ENCODE measurements at regions of chr1 and their contacts with region 1.

Region 1: GRCh38 chr1:172719694-172720138 is 60.8 kb downstream of the FASLG start:
- DNase-seq: peak; percentile 57
- ATAC-seq: peak; percentile 83
- H3K4me3 ChIP-seq: no peak overlapping the region
- H3K27ac ChIP-seq: no peak overlapping the region
- H3K4me1 ChIP-seq: peaks cover 4% of the 10 kb centered on the region; the same call in 1 of the 2 replicates
- H3K27me3 ChIP-seq: no peaks in the 10 kb centered on the region
- CTCF ChIP-seq: peak; percentile 75
- POLR2A ChIP-seq: no peak
- RAD21 ChIP-seq: peak; percentile 82

Region 2: GRCh38 chr1:172449585-172450534 is 269.9 kb before region 1 on chr1:
- CTCF ChIA-PET with region 1: interaction called, 10 read pairs
- POLR2A ChIA-PET with region 1: no interaction called
- dilution Hi-C with region 1: no loop called
- in situ Hi-C with region 1: loop called (anchors 5 kb)
- intact Hi-C with region 1: loop called (anchors 1 kb)
- DNase-seq: peak; percentile 51
- ATAC-seq: peak; percentile 95
- H3K4me3 ChIP-seq: no peak overlapping the region
- H3K27ac ChIP-seq: no peak overlapping the region
- H3K4me1 ChIP-seq: peaks cover 10% of the 10 kb centered on the region
- H3K27me3 ChIP-seq: peaks cover 5% of the 10 kb centered on the region
- CTCF ChIP-seq: peak; percentile 80
- POLR2A ChIP-seq: no peak
- RAD21 ChIP-seq: peak; percentile 76

Region 3: GRCh38 chr1:172532700-172533509 is 186.8 kb before region 1 on chr1 and contains the start of gene SUCO:
- CTCF ChIA-PET with region 1: interaction called, 4 read pairs
- POLR2A ChIA-PET with region 1: no interaction called
- dilution Hi-C with region 1: no loop called
- in situ Hi-C with region 1: no loop called
- intact Hi-C with region 1: loop called (anchors 1 kb)
- DNase-seq: peak; percentile 99
- ATAC-seq: peak; percentile 92
- H3K4me3 ChIP-seq: peak within 1 kb of the TSS; percentile 97
- H3K27ac ChIP-seq: peak within 1 kb of the TSS; percentile 83
- H3K4me1 ChIP-seq: peaks cover 2% of the 10 kb centered on the region; the same call in 1 of the 2 replicates
- H3K27me3 ChIP-seq: no peaks in the 10 kb centered on the region
- CTCF ChIP-seq: no peak
- POLR2A ChIP-seq: peak; percentile 86
- RAD21 ChIP-seq: peak; percentile 1; the same call in 1 of the 2 replicates
- total RNA-seq, gene SUCO: 21.5 and 31.7 TPM in 2 replicates

Region 4: GRCh38 chr1:172609528-172609927 is 110.2 kb before region 1 on chr1:
- CTCF ChIA-PET with region 1: interaction called, 6 read pairs
- POLR2A ChIA-PET with region 1: no interaction called
- dilution Hi-C with region 1: no loop called
- in situ Hi-C with region 1: no loop called
- intact Hi-C with region 1: loop called (anchors 1 kb)
- DNase-seq: no peak
- ATAC-seq: no peak
- H3K4me3 ChIP-seq: no peak overlapping the region
- H3K27ac ChIP-seq: no peak overlapping the region
- H3K4me1 ChIP-seq: 0 out of 2 replicates have a peak, but pooled peaks cover 2% of the 10 kb centered on the region
- H3K27me3 ChIP-seq: no peaks in the 10 kb centered on the region
- CTCF ChIP-seq: peak; percentile 39; the same call in 1 of the 2 replicates
- POLR2A ChIP-seq: no peak
- RAD21 ChIP-seq: peak; percentile 43

Region 5: GRCh38 chr1:172638885-172639831 is 80.6 kb before region 1 on chr1:
- CTCF ChIA-PET with region 1: no interaction called
- POLR2A ChIA-PET with region 1: no interaction called
- dilution Hi-C with region 1: no loop called
- in situ Hi-C with region 1: no loop called
- intact Hi-C with region 1: loop called (anchors 5 kb)
- DNase-seq: peak; percentile 99
- ATAC-seq: peak; percentile 76
- H3K4me3 ChIP-seq: no peak overlapping the region
- H3K27ac ChIP-seq: peak overlapping the region; percentile 79
- H3K4me1 ChIP-seq: peaks cover 21% of the 10 kb centered on the region
- H3K27me3 ChIP-seq: no peaks in the 10 kb centered on the region
- CTCF ChIP-seq: no peak
- POLR2A ChIP-seq: no peak
- RAD21 ChIP-seq: no peak

Region 6: DNA sequence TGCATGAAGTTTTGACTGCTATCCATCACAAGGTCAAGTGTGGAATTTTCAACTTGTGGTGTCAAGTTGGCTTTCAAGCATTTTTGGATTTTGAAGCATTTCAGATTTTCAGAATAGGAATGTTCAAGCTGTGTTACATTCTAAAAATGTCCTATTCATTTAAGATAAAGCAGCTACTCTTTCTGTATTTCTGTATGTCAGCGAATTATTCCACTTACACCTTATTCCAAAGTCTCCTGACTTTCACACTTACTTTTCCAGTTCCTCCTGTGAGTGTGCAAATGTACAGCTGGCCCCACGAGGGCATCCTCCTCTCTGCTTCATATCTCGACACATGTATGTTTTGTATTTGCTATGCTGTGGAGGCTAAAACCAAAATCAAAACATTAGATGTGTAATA is 1250.5 kb after region 1 on chr1:
- CTCF ChIA-PET with region 1: no interaction called
- POLR2A ChIA-PET with region 1: no interaction called
- dilution Hi-C with region 1: no loop called
- in situ Hi-C with region 1: no loop called
- intact Hi-C with region 1: no loop called
- DNase-seq: no peak
- ATAC-seq: no peak
- H3K4me3 ChIP-seq: no peak overlapping the region
- H3K27ac ChIP-seq: no peak overlapping the region
- H3K4me1 ChIP-seq: no peaks in the 10 kb centered on the region
- H3K27me3 ChIP-seq: no peaks in the 10 kb centered on the region
- CTCF ChIP-seq: no peak
- POLR2A ChIP-seq: no peak
- RAD21 ChIP-seq: no peak